ENCODE measurements at regions of chr2 and their contacts with region 1.

Region 1: GRCh38 chr2:206783718-206784117 is 18.3 kb downstream of the FASTKD2 start:
- DNase-seq: no peak
- ATAC-seq: no peak
- H3K4me3 ChIP-seq: no peak overlapping the region
- H3K27ac ChIP-seq: no peak overlapping the region
- H3K4me1 ChIP-seq: no peaks in the 10 kb centered on the region
- H3K27me3 ChIP-seq: no peaks in the 10 kb centered on the region
- CTCF ChIP-seq: peak in 8 of 9 donors; percentile 7 to 48 (median 39)

Region 2: GRCh38 chr2:206693399-206694137 is 90.2 kb before region 1 on chr2:
- intact Hi-C with region 1: loop called in 9 of 10 experiments (anchors 1 to 5 kb)
- DNase-seq: peak in 1 of 2 donors; percentile 22
- ATAC-seq: peak in 4 of 8 donors; percentile 37 to 64 (median 57)
- H3K4me3 ChIP-seq: no peak overlapping the region
- H3K27ac ChIP-seq: no peak overlapping the region
- H3K4me1 ChIP-seq: no peaks in the 10 kb centered on the region
- H3K27me3 ChIP-seq: no peaks in the 10 kb centered on the region
- CTCF ChIP-seq: peak; percentile 42 to 81 (median 67)